Vagina (tissue), 2 donors: ENCODE measurements at regions of chr12 and their contacts with region 1.

Region 1: DNA sequence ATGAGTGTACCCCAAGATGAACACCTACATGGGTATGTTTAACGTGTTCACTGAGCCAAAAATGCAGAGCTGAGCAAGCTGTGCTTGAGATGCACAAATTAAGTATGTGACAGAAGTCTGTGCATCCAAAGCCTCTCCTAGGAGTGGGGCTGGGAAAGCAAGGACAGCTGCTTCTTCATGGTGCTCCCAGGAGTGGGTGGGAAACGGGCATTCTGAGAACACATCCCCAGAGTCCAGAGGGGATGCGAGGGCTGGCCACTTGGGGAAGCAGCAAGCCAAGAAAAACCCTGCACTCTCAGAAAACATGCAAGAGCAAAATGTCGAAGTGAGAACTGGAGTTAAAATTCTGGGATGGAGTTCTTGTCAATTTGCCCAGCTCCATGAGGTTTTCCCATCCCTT is 414.3 kb downstream of the BCAT1 start:
- DNase-seq: no peak
- H3K4me3 ChIP-seq: peak overlapping the region in 1 of 2 donors; percentile 0
- H3K27ac ChIP-seq: peak overlapping the region; percentile 39
- H3K4me1 ChIP-seq: peaks cover 35% of the 10 kb centered on the region
- H3K27me3 ChIP-seq: no peaks in the 10 kb centered on the region
- CTCF ChIP-seq: no peak
- POLR2A ChIP-seq: no peak

Region 2: GRCh38 chr12:24488091-24488596 is 46.5 kb before region 1 on chr12:
- intact Hi-C with region 1: loop called (anchors 1 kb)
- DNase-seq: no peak
- H3K4me3 ChIP-seq: no peak overlapping the region
- H3K27ac ChIP-seq: no peak overlapping the region
- H3K4me1 ChIP-seq: peaks cover 40% of the 10 kb centered on the region
- H3K27me3 ChIP-seq: no peaks in the 10 kb centered on the region
- CTCF ChIP-seq: no peak
- POLR2A ChIP-seq: no peak

Region 3: GRCh38 chr12:24989216-24989615 is 454.6 kb after region 1 on chr12:
- intact Hi-C with region 1: no loop called
- DNase-seq: no peak
- H3K4me3 ChIP-seq: no peak overlapping the region
- H3K27ac ChIP-seq: no peak overlapping the region
- H3K4me1 ChIP-seq: no peaks in the 10 kb centered on the region
- H3K27me3 ChIP-seq: no peaks in the 10 kb centered on the region
- CTCF ChIP-seq: no peak
- POLR2A ChIP-seq: no peak